Heart left ventricle (tissue), 16 donors: ENCODE measurements at regions of chr22 and their contacts with region 1.

Region 1: DNA sequence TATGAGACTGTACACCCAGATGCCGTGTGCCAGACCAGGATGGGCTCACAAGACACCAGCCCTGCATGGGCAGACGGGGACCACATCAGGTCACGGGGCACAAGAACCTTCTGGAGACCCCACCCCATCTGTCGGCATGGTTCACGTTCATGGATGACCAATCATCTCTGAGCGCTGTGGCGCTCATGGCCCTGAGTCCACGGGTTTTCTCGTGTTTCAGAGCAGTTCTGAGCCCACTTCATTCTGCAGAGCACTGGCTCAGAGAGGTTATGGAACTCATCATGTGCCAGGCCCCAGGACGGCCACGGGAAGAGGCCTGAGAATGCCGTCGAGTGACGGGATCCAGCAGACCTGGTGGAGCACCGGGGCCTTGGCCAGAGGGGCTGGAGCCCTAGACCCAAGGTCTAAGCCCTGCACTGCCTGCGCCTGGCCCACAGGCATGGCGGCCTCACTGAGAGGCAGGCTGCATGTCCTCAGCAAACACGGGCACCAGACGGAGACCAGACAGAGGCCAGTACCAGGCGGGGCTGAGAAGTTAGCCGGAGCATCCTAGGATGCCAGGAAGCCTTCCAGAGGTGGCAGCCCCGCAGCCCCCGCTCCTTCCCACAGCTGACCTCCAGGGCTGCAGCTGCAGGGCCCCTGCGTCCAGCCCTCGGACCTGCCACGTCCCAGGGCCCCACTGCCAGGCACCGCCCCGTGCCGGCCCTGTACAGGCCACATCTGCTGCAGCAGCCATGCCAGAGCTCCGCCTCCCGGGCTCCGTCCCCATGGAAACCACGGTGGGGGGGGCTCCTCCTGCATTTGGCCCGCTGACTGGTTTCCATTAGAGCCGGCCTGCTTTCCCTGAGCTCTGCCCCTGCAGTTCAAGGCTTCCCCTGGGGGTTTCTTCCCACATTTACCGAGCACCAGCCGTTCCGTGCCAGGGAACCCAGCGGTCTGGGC is 62.7 kb upstream of the PPARA start:
- DNase-seq: peak; percentile 91 to 94 (median 94)
- ATAC-seq: peak; percentile 66 to 80 (median 78)
- H3K4me3 ChIP-seq: peak overlapping the region in 10 of 12 donors; percentile 4 to 97 (median 36)
- H3K27ac ChIP-seq: peak overlapping the region; percentile 83 to 100 (median 98)
- H3K4me1 ChIP-seq: peaks cover 60 to 100% (median 98%) of the 10 kb centered on the region in 12 donors
- H3K27me3 ChIP-seq: no peaks in the 10 kb centered on the region
- CTCF ChIP-seq: no peak
- POLR2A ChIP-seq: peak in 1 of 2 donors; percentile 37

Region 2: DNA sequence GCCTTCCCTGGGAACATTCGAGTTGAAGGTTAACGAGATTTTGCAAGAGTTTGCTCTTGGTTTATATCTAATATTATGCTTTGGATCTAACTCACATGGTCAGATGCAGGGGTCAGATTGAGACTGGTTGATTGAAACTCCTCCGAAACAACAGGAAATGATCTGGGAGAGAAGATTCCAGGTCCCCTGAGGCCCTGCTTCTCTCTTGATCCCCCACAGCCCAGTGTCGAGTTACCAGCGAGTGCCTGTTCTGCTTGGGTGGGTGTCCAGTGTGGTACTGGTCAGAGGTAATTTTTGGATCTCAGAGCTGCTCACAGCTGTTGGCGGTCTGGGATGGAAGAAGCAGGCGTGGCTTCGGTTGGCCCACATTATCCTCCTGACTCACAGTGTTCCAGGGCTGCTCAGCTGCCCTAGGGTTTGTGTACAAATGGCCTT is 575.7 kb before region 1 on chr22:
- intact Hi-C with region 1: no loop called
- DNase-seq: peak; percentile 70 to 85 (median 78)
- ATAC-seq: peak; percentile 74 to 93 (median 88)
- H3K4me3 ChIP-seq: no peak overlapping the region
- H3K27ac ChIP-seq: peak overlapping the region; percentile 23 to 77 (median 62)
- H3K4me1 ChIP-seq: peaks cover 0 to 65% (median 15%) of the 10 kb centered on the region in 12 donors
- H3K27me3 ChIP-seq: peaks cover 0 to 3% (median 0%) of the 10 kb centered on the region in 9 donors
- CTCF ChIP-seq: no peak
- POLR2A ChIP-seq: no peak

Region 3: DNA sequence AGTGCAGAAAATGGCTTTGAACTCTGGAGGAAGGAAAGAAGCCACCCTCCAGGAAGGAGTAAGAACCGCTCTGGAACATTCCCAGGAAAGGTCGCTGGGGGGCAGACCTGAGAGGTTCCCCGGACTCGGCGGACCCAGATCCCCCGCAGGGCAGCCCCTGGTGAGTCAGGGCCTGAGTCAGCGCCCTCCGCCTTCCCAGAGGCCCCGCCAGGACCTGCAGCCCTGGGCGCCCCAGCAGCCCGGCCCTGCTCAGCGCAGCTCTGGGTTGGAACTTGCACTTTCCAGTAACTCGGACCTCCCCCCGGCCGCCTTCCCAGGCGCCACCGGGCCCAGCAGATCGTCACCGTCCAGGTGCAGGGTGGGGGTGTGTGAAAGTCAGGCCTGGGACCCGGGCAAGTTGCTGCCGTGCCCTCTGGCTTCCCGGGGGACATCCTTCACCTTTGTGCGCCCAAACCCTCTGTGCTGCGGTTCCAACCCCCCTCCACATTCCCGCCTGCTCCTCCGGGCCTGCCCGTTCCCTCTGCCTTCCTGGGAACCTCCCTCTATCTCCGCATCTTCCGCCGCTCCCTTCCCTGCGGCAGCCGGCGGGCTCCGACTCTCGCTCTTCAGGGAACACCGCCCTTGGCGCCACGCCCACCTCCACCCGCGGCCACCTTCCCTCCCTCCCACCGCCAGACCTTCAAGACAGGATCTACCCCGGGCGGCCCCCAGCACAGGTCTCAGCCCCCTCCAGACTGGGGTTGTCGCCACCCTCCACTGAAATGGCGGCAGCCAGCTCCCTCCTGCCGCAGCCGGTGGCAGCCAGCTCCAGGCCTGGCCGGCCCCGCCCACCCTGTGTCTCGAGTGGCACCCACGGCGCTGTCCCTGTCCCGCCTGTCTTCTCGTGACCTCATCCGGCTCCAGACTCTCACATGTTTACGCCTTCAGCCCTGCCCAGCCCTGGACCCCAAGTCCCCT is 73.9 kb before region 1 on chr22:
- intact Hi-C with region 1: loop called in 2 of 10 experiments (anchors 5 kb)
- DNase-seq: peak; percentile 92 to 98 (median 95)
- ATAC-seq: peak; percentile 92 to 97 (median 95)
- H3K4me3 ChIP-seq: peak overlapping the region; percentile 45 to 77 (median 64)
- H3K27ac ChIP-seq: peak overlapping the region; percentile 92 to 98 (median 96)
- H3K4me1 ChIP-seq: peaks cover 0 to 39% (median 23%) of the 10 kb centered on the region in 12 donors
- H3K27me3 ChIP-seq: no peaks in the 10 kb centered on the region
- CTCF ChIP-seq: peak; percentile 62 to 84 (median 71)
- POLR2A ChIP-seq: peak; percentile 4 to 24

Region 4: DNA sequence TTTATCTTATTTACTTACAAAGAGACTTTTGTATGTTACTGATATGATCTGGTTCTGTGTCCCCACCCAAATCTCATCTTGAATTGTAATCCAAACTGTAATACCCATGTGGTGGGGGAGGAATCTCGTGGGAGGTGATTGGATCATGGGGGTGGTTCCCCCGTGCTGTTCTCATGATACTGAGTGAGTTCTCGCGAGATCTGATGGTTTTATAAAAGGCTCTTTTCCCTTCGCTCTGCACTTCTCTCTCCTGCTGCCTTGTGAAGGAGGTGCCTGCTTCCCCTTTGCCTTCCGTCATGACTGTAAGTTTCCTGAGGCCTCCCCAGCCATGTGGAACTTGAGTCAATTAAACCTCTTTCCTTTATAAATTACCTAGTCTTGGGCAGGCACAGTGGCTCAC is 68.3 kb before region 1 on chr22:
- intact Hi-C with region 1: loop called in 2 of 10 experiments (anchors 5 kb)
- DNase-seq: no peak
- ATAC-seq: no peak
- H3K4me3 ChIP-seq: no peak overlapping the region
- H3K27ac ChIP-seq: no peak overlapping the region
- H3K4me1 ChIP-seq: peaks cover 0 to 14% (median 1%) of the 10 kb centered on the region in 12 donors
- H3K27me3 ChIP-seq: no peaks in the 10 kb centered on the region
- CTCF ChIP-seq: no peak
- POLR2A ChIP-seq: no peak

Region 5: GRCh38 chr22:46108564-46109473 is 21.2 kb after region 1 on chr22:
- intact Hi-C with region 1: loop called in 2 of 10 experiments (anchors 2 kb)
- DNase-seq: peak in 4 of 5 donors; percentile 75 to 80 (median 75)
- ATAC-seq: peak; percentile 37 to 52 (median 48)
- H3K4me3 ChIP-seq: no peak overlapping the region
- H3K27ac ChIP-seq: peak overlapping the region; percentile 45 to 88 (median 82)
- H3K4me1 ChIP-seq: peaks cover 46 to 100% (median 97%) of the 10 kb centered on the region in 12 donors
- H3K27me3 ChIP-seq: no peaks in the 10 kb centered on the region
- CTCF ChIP-seq: peak in 1 of 12 donors; percentile 8
- POLR2A ChIP-seq: no peak

Region 6: GRCh38 chr22:46219636-46220035 is 132.0 kb after region 1 on chr22:
- intact Hi-C with region 1: no loop called
- DNase-seq: no peak
- ATAC-seq: no peak
- H3K4me3 ChIP-seq: no peak overlapping the region
- H3K27ac ChIP-seq: no peak overlapping the region
- H3K4me1 ChIP-seq: no peaks in the 10 kb centered on the region
- H3K27me3 ChIP-seq: no peaks in the 10 kb centered on the region
- CTCF ChIP-seq: no peak
- POLR2A ChIP-seq: no peak

Region 7: DNA sequence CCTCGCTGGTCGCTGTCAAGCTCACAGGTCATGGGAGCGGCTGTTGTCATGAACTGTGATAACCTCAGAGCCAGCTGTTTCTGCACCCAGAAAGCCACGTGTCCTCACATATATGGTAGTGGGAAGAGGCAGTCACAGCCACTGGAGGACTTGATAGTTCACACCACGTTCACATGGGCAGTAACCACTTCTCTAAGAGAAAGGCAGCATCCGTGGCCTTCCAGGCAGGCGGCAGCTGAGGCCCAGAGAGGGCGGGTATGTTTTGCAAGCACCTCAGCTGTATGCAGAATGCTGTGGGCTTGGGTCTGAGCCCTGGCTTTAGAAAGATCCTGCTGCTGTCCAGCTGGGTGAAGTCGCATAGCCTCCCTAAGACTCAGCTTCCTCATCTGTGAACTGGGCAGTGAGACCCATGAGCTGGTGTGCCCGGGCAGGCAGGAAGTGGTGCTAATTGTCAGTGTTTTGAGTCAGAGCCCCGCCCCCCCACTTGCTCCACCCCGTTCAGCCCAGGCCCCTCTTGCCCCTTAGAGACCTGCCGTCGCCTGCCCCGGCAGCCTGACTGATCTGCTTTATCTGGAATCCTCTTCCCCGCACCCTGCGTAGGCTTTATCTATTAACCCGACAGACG is 193.5 kb after region 1 on chr22:
- intact Hi-C with region 1: no loop called
- DNase-seq: peak in 1 of 5 donors; percentile 72
- ATAC-seq: peak; percentile 58 to 84 (median 70)
- H3K4me3 ChIP-seq: no peak overlapping the region
- H3K27ac ChIP-seq: peak overlapping the region in 9 of 12 donors; percentile 43 to 80 (median 58)
- H3K4me1 ChIP-seq: peaks cover 0 to 23% (median 10%) of the 10 kb centered on the region in 12 donors
- H3K27me3 ChIP-seq: no peaks in the 10 kb centered on the region
- CTCF ChIP-seq: no peak
- POLR2A ChIP-seq: no peak